Lower leg skin (tissue), 4 donors: ENCODE measurements at regions of chr10 and their contacts with region 1.

Region 1: DNA sequence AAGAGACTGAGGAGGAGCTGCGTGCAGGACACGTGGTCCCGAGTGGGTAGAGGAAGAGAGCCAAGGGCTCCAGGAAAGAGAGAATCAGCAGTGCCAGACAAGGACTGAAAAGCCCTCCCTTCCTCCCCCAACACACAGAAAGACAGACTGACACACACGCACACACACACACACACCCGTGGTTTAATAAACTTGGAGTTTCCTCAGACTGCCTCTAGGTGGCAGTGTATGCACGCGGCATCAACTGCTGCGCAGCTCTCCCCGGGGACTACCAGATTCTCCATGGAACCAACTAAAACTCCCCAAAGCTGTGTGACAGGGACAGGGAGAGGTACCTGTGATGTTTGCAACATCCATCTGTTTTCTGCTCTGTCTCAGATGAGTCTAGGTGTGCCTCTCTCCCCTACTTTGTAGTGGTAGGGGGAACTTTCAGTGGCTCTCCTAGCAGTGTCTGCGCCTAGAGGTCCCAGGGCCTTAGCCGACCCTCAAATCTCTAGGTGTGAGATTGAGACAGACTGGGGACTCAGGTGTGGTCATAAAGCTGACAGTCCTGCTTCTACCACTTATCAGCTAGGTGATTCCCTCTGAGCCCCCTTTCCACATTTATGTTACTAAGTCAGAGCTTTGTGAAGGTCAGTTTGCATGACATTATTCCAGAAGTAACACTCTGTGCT is 9.3 kb upstream of the TSPAN14 start:
- DNase-seq: no peak
- H3K4me3 ChIP-seq: no peak overlapping the region
- CTCF ChIP-seq: peak in 1 of 3 donors; percentile 31
- POLR2A ChIP-seq: no peak

Region 2: DNA sequence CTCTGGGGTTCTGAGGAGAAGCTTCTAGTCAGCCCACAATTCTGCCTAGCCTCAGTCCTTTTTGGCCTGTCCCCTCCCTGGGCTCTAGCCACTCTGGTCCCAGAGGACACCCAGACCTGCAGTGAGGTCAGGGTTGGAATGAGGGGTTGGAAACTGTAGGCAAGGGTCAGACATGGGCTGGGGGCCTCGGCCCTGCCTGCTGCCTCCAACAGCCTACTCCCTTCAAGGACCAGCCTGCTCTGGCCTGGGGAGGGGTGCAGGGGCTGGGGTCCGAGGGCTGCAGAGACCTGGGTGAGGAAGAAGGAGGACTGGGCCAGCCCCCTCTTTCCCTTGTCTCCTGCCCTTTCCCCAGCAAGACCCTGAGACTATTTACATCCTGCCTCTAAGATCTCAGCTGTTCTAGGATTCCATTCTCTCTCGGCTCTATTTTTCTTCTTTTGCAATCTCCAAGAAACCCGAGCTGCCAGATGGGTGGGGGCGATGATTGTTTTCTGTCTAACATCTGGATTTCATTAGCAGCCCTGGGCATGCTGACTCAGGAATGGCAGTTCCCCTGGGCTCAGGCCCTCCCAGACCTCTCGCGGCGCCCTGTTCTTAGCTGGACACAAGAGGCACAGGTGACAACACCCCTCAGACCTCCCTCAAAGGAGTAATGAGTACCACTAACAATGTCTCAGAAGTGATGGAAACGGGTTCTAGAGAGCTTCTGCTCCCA is 1022.4 kb before region 1 on chr10:
- intact Hi-C with region 1: no loop called
- DNase-seq: peak in 1 of 2 donors; percentile 78
- H3K4me3 ChIP-seq: no peak overlapping the region
- CTCF ChIP-seq: no peak
- POLR2A ChIP-seq: no peak

Region 3: GRCh38 chr10:80739963-80740715 is 295.4 kb after region 1 on chr10:
- intact Hi-C with region 1: no loop called
- DNase-seq: peak in 1 of 2 donors; percentile 69
- H3K4me3 ChIP-seq: no peak overlapping the region
- CTCF ChIP-seq: no peak
- POLR2A ChIP-seq: no peak

Region 4: DNA sequence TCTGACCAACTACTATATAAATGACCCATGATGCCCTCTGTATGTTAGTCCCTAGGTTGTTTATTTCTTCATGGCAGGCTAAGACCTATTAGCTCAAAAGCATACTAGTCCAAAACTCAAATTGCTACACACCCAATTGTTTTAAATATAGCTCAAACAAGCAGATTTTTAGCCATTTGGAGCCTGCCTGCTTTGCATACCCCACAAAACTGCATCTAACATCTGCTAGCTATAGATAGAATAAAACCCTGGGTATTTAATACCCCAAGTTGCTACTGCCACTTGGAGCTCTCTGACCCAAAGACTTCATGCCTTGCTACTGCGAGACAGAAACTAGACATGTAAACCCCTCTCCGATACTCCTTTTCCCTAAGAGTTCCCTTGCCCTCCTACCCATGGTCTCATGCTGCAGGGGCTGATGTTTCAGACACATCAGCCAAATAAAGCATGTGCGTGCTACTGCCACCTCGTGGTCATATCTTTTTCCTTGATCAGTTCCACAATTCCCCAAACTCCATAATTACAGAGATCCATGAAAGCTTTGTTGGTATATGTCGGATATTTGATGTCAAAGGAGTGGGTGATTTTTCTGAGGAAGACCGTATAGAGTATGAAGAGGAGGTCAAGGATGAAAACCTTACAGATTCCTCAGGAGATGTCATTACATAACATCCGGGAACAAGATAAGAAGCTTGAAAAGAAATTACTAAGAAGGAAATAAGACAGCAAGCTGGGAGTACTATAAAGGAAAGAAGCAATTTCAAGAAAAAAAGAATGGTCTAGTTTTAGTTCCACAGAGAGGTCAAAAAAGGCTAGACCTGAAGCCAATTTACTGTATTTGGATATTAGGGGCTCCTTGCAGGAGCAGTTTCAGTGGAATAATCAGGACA is 479.5 kb after region 1 on chr10:
- intact Hi-C with region 1: loop called (anchors 10 kb)
- DNase-seq: no peak
- H3K4me3 ChIP-seq: no peak overlapping the region
- CTCF ChIP-seq: no peak
- POLR2A ChIP-seq: no peak